WTC11 (cell line): ENCODE measurements at regions of chr18 and their contacts with region 1.

Region 1: GRCh38 chr18:32552421-32553030 is 81.8 kb upstream of the GAREM1 start:
- DNase-seq: peak; percentile 67
- ATAC-seq: peak; percentile 71
- H3K4me3 Mint-ChIP-seq: no peak overlapping the region
- H3K27ac Mint-ChIP-seq: no peak overlapping the region; the same call in 1 of the 2 replicates
- H3K4me1 Mint-ChIP-seq: peaks cover 47% of the 10 kb centered on the region
- H3K27me3 Mint-ChIP-seq: no peaks in the 10 kb centered on the region
- CTCF ChIP-seq: peak; percentile 69

Region 2: GRCh38 chr18:30792051-30792450 is 1760.5 kb before region 1 on chr18:
- CTCF ChIA-PET with region 1: no interaction called
- POLR2A ChIA-PET with region 1: no interaction called
- DNase-seq: no peak
- ATAC-seq: no peak
- H3K4me3 Mint-ChIP-seq: no peak overlapping the region
- H3K27ac Mint-ChIP-seq: no peak overlapping the region
- H3K4me1 Mint-ChIP-seq: peaks cover 11% of the 10 kb centered on the region
- H3K27me3 Mint-ChIP-seq: peaks cover 55% of the 10 kb centered on the region
- CTCF ChIP-seq: no peak

Region 3: DNA sequence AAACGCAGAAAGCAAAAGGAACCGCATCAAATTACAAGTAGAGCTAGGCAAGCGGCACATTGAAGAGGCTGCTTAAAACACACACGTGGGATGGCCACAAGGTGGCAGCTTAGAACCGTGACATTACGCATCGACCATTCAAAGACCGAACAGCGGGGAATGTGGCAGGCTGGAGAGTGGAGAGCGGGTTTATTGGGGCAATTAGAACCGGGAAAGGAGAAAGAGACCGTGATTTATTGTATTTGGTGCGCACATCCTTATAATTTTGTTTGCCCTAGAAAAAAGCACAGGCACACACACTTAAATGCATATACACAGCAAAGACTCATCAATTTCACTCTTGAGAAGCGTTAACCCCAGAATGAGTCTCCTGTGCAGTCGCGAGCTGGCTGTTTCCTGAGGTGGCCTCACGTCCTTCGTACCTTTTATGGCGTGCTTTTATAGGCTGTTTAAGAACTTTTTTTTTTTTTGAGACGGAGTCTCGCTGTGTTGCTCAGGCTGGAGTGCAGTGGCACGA is 394.4 kb before region 1 on chr18:
- CTCF ChIA-PET with region 1: interaction called, 86 read pairs
- POLR2A ChIA-PET with region 1: no interaction called
- DNase-seq: peak; percentile 84
- ATAC-seq: peak; percentile 96
- H3K4me3 Mint-ChIP-seq: peak overlapping the region; percentile 53
- H3K27ac Mint-ChIP-seq: no peak overlapping the region
- H3K4me1 Mint-ChIP-seq: peaks cover 9% of the 10 kb centered on the region
- H3K27me3 Mint-ChIP-seq: no peaks in the 10 kb centered on the region
- CTCF ChIP-seq: peak; percentile 59

Region 4: DNA sequence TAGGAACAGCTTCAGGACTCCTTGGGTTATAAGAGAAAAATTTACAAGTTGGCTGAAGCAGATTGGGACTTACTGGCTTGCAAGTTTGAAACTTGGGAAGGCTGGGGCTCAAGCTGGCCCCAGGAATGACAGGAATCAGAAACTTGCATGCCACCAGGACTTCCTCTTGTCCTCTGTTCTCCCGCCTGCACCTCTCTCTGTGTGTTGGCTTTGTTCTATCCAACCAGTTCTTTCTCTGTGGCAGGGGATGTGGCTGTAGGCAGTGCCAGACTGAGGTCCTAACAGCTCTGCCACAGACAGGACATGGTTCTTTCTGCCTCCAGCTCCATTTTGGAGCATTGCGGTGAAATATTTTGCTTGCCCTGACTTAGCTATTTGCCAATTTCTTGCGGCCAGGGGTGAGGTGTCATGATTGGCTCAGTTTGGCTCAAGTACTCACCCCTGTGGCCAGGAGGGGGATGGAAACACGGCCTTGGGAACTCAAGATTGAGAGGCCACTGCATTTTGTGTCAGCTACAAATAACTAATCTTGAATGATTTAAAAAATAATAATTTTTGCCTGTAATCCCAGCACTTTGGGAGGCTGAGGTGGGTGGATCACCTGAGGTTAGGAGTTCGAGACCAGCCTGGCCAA is 313.8 kb before region 1 on chr18:
- CTCF ChIA-PET with region 1: interaction called, 10 read pairs
- POLR2A ChIA-PET with region 1: no interaction called
- DNase-seq: peak; percentile 19
- ATAC-seq: peak; percentile 79
- H3K4me3 Mint-ChIP-seq: no peak overlapping the region
- H3K27ac Mint-ChIP-seq: peak overlapping the region; percentile 70; the same call in 1 of the 2 replicates
- H3K4me1 Mint-ChIP-seq: peaks cover 33% of the 10 kb centered on the region
- H3K27me3 Mint-ChIP-seq: no peaks in the 10 kb centered on the region
- CTCF ChIP-seq: no peak

Region 5: GRCh38 chr18:32271672-32272208 is 280.8 kb before region 1 on chr18:
- CTCF ChIA-PET with region 1: interaction called, 40 read pairs
- POLR2A ChIA-PET with region 1: no interaction called
- DNase-seq: peak; percentile 31
- ATAC-seq: peak; percentile 88
- H3K4me3 Mint-ChIP-seq: no peak overlapping the region
- H3K27ac Mint-ChIP-seq: peak overlapping the region; percentile 10; the same call in 1 of the 2 replicates
- H3K4me1 Mint-ChIP-seq: peaks cover 19% of the 10 kb centered on the region
- H3K27me3 Mint-ChIP-seq: no peaks in the 10 kb centered on the region
- CTCF ChIP-seq: no peak

Region 6: DNA sequence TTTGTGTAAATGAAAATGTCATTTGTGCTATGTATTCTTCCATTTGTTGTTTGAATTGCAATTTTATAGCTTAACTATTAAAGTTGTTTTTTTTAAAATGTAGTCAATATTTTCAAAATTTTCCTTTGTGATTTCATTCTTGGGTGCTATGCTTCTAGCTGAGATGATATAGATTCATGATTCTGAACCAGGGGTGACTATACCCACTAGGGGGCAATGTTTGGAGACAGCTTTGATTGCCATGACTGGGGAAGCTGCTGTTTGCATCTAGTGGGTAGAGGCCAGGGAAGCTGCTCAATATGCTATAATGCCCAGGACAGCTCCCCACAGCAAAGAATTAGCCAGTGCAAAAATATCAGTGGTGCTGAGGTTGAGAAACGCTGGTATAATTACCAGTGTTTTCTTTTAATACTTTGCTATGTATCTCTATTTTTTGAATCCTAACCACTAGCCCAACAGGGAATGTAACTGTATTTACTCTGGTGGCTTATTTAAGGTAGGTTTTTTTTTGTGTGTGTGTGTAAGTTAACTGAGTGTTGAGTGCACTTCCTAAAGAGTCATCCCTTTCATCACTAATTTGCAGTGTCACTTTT is 262.9 kb before region 1 on chr18:
- CTCF ChIA-PET with region 1: interaction called, 20 read pairs
- POLR2A ChIA-PET with region 1: no interaction called
- DNase-seq: peak; percentile 59
- ATAC-seq: peak; percentile 89
- H3K4me3 Mint-ChIP-seq: no peak overlapping the region
- H3K27ac Mint-ChIP-seq: no peak overlapping the region
- H3K4me1 Mint-ChIP-seq: peaks cover 8% of the 10 kb centered on the region
- H3K27me3 Mint-ChIP-seq: no peaks in the 10 kb centered on the region
- CTCF ChIP-seq: peak; percentile 49; the same call in 1 of the 2 replicates

Region 7: GRCh38 chr18:32401621-32402020 is 150.9 kb before region 1 on chr18:
- CTCF ChIA-PET with region 1: no interaction called
- POLR2A ChIA-PET with region 1: no interaction called
- DNase-seq: no peak
- ATAC-seq: no peak
- H3K4me3 Mint-ChIP-seq: no peak overlapping the region
- H3K27ac Mint-ChIP-seq: no peak overlapping the region
- H3K4me1 Mint-ChIP-seq: peaks cover 12% of the 10 kb centered on the region
- H3K27me3 Mint-ChIP-seq: no peaks in the 10 kb centered on the region
- CTCF ChIP-seq: no peak

Region 8: GRCh38 chr18:32439802-32440201 is 112.7 kb before region 1 on chr18:
- CTCF ChIA-PET with region 1: interaction called, 11 read pairs
- POLR2A ChIA-PET with region 1: no interaction called
- DNase-seq: peak; percentile 48
- ATAC-seq: peak; percentile 94
- H3K4me3 Mint-ChIP-seq: no peak overlapping the region
- H3K27ac Mint-ChIP-seq: no peak overlapping the region
- H3K4me1 Mint-ChIP-seq: peaks cover 7% of the 10 kb centered on the region; the same call in 1 of the 2 replicates
- H3K27me3 Mint-ChIP-seq: no peaks in the 10 kb centered on the region
- CTCF ChIP-seq: no peak

Region 9: DNA sequence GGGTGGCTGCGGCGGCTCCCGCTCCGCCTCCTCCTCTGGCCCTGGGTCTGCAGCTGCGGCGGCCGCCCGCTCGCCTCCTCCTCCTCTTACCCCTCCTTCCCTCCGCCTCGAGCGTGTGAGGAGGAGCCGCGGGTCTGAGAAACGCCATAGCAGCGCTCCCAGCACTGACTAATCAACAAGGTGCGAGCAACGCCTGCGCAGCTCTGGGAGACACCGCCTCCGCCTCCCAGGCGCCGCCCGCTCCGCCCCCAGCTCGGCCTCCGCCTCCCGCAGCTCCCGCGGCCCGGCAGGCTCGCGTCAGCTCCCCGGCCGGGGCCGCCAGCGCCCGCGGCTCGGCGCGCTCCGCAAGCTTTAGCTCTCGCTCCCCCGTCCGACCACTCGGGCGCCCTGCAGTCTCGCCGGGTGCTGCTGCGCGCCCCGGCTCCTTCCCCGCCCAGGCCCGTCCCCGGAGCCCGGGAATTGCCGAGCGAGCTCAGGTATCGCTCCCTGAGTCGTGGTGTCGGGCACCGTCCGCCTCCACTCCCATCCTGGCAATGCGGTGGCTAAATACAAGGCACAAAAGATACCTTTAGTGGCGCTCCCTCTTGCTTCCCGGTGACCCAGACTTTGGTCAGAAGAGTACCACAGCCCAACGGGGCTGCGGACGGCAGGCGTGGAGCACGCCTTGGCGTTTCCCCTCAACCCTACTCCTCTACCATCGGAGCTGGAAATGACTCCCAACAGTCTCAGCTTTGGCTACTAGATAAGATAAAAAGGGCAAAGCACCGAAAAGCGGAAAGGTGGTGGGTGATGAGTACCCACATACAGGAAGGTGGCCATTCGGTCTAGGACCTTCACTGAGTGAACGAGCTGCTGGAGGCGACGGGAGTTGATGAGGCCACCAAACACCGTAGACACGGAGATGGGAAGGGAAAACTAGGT is 81.6 kb before region 1 on chr18 and contains the start of gene GAREM1:
- CTCF ChIA-PET with region 1: interaction called, 109 read pairs
- POLR2A ChIA-PET with region 1: interaction called, 3 read pairs
- DNase-seq: peak; percentile 91
- ATAC-seq: peak; percentile 89
- H3K4me3 Mint-ChIP-seq: peak within 1 kb of the TSS; percentile 93
- H3K27ac Mint-ChIP-seq: peak within 1 kb of the TSS; percentile 89
- H3K4me1 Mint-ChIP-seq: peaks cover 30% of the 10 kb centered on the region
- H3K27me3 Mint-ChIP-seq: peaks cover 29% of the 10 kb centered on the region
- CTCF ChIP-seq: no peak
- total RNA-seq, gene GAREM1: 7.0 to 7.7 TPM (median 7.4 TPM) in 3 replicates

Region 10: DNA sequence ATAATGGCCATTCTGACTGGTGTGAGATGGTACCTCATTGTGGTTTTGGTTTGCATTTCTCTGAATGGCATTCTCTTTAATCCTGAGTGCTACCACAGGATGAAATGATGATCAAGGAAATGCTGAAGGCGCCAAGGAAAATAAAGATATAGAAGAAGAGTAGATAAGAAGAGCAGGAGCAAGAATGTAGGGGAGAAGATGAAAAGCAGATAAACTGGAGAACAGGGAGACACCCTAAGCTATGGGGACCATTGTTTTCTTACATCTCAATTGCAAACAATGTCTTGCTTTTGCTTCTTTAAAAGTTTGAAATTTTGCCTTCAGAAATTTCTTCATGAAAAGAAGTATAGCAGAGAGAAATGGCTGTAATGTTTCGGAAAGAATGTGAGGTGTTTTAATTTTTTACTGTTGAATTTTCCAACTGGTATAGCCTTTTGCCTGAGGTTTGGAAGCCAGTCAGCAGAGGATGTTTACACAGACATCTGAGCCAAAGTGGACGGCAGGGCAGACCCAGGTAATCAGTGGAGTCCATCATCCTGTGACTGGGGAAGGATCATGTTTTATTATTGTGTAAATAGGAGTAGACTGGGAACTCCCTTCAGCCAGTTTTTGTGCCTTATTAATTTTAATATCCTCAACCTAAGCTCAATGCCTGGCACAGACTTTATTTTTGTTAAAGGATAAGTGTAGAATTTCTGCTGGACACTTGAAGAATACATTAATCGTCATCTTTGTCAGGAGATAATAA is 59.9 kb after region 1 on chr18:
- CTCF ChIA-PET with region 1: no interaction called
- POLR2A ChIA-PET with region 1: no interaction called
- DNase-seq: no peak
- ATAC-seq: no peak
- H3K4me3 Mint-ChIP-seq: no peak overlapping the region
- H3K27ac Mint-ChIP-seq: no peak overlapping the region
- H3K4me1 Mint-ChIP-seq: peaks cover 9% of the 10 kb centered on the region; the same call in 1 of the 2 replicates
- H3K27me3 Mint-ChIP-seq: no peaks in the 10 kb centered on the region
- CTCF ChIP-seq: no peak

Region 11: DNA sequence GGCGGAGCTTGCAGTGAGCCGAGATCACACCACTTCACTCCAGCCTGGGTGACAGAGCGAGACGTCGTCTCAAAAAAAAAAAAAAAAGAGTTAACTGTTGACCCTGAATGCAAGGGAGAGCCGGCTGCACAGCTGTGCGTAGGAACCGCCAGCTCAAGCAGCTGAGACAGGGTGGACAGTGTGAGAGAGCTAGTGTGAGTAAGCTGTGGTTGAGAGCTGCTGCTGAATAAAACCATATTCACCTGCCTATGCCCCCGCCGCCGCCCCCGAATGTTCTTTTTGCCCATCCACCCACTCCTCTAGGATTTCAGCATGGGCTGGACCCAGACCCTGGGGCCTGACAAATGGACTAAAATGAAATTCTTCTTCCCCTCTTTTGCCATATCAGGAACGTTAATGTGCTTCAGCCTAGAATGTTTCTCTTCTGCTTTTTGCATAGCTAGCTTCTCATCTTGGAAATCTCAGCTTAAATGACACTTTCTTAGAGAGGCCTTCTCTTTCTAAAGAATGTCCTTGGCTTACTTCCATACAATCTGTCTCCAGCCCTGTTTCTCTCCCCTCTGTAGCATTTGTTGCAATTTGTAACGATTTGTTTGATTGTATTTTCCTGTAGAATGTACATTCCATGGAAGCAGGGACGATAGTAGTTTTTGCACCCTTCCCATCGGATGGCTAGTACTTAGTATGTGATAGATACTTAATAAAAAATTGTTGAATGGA is 77.6 kb after region 1 on chr18:
- CTCF ChIA-PET with region 1: no interaction called
- POLR2A ChIA-PET with region 1: no interaction called
- DNase-seq: no peak
- ATAC-seq: no peak
- H3K4me3 Mint-ChIP-seq: no peak overlapping the region
- H3K27ac Mint-ChIP-seq: no peak overlapping the region
- H3K4me1 Mint-ChIP-seq: no peaks in the 10 kb centered on the region
- H3K27me3 Mint-ChIP-seq: no peaks in the 10 kb centered on the region
- CTCF ChIP-seq: no peak